Psoas muscle (tissue), 8 donors: ENCODE measurements at regions of chr11 and their contacts with region 1.

Region 1: GRCh38 chr11:67507864-67508485 is at the start of gene CDK2AP2:
- DNase-seq: peak; percentile 100
- ATAC-seq: peak; percentile 85 to 90 (median 88)
- H3K4me3 ChIP-seq: peak within 1 kb of the TSS; percentile 90
- H3K27ac ChIP-seq: peak within 1 kb of the TSS; percentile 99
- H3K4me1 ChIP-seq: peaks cover 27% of the 10 kb centered on the region
- H3K27me3 ChIP-seq: peaks cover 0 to 11% (median 8%) of the 10 kb centered on the region in 3 donors
- CTCF ChIP-seq: no peak
- total RNA-seq, gene CDK2AP2: 16.3 to 18.5 (median 18.1) TPM

Region 2: GRCh38 chr11:67356864-67357561 is 151.0 kb before region 1 on chr11:
- intact Hi-C with region 1: loop called in 1 of 2 experiments (anchors 2 kb)
- DNase-seq: peak in 1 of 2 donors; percentile 79
- ATAC-seq: peak; percentile 20 to 37 (median 30)
- H3K4me3 ChIP-seq: no peak overlapping the region
- H3K27ac ChIP-seq: peak overlapping the region; percentile 99
- H3K4me1 ChIP-seq: peaks cover 40% of the 10 kb centered on the region
- H3K27me3 ChIP-seq: no peaks in the 10 kb centered on the region
- CTCF ChIP-seq: peak; percentile 89

Region 3: DNA sequence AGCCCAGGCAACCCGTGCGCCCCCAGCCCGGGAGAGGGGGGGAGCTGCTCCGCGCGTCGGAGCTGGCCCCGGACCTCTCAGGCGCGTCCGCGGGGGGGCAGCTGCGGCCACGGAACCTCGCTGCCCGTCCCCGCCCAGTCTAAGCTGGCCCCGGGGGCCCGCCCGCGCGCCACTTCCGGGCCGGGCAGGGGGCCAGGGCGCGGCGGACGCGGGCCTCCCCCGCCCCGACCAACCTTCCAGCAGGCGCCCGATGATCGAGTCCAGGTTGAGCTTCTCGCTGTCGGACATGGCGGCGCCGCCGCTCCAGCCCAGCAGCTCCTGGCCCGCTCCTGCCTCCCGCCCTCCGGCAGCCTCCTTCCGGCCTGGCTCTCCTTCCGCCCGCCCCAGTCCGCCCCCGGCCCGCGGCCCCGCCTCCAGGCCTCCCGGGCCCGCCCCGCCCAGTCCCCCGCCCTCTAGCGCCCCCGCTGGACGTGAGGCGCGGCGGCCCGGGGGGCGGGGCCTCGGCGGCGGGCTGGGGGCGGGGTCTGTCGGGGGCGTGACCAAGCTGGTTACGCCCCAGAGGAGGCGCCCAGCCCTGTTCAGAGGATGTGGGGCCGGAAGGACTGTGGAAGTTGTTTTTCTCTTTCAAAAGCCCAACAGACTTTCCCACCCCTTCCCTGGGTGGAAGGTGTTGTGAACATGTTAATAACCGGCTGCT is 106.3 kb before region 1 on chr11 and contains the start of gene PPP1CA:
- intact Hi-C with region 1: loop called (anchors 1 to 2 kb)
- DNase-seq: peak; percentile 91 to 96
- ATAC-seq: peak; percentile 89 to 92 (median 92)
- H3K4me3 ChIP-seq: peak within 1 kb of the TSS; percentile 99
- H3K27ac ChIP-seq: peak within 1 kb of the TSS; percentile 95
- H3K4me1 ChIP-seq: peaks cover 32% of the 10 kb centered on the region
- H3K27me3 ChIP-seq: no peaks in the 10 kb centered on the region
- CTCF ChIP-seq: peak; percentile 63
- total RNA-seq, gene PPP1CA: 72.6 to 113 (median 86.6) TPM

Region 4: DNA sequence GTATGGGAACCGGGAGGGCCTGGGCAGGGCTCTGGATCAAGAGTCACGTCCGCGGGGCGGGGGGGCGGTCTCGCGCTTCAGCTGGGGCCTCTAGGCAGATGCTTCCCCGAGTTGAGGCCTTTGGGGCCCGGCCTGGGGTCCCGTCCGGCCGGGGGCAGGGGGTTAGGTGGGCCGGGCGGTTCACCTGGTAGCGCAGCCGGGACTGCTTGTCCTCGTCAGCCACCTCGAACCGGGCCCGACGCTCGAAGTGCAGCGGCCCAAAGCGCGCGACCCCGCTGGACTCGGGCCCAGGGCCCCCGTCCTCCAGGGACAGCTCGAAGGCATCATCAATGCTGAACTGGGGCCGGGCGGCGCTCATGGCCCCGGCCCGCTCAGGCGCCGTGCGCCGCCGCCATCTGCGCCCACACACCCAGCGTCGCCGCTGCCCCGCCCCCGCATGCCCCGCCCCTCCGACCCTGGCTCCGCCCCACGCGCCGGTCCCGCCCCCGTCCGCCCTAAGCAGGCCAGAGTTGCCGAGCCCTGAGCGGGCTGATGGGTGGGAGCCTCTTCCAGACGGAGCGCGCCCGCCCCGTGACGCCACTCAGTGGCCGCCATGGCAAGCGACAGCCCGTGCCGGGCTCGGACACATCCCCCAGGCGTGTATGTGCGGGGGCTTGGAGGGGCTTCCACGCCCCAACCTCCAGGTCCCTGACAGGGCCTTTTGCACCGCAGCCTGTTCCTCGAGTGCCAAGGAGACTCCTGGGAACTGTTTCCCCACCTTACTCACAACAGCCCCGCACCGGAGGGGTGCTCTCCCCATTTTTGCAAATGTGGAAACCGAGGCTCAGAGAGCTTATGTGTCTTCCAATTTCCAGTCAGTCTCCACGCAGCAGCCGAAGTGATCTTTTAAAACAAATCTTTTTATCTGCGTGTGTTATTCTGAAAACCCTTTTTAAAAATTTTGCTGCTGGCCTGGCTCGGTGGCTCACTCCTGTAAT is 38.9 kb before region 1 on chr11 and contains the start of gene TMEM134:
- intact Hi-C with region 1: loop called in 1 of 2 experiments (anchors 5 kb)
- DNase-seq: peak; percentile 93 to 97
- ATAC-seq: peak; percentile 93 to 97 (median 96)
- H3K4me3 ChIP-seq: peak within 1 kb of the TSS; percentile 98
- H3K27ac ChIP-seq: peak within 1 kb of the TSS; percentile 85
- H3K4me1 ChIP-seq: peaks cover 13% of the 10 kb centered on the region
- H3K27me3 ChIP-seq: no peaks in the 10 kb centered on the region
- CTCF ChIP-seq: peak; percentile 47
- total RNA-seq, gene TMEM134: 57.1 to 83.2 (median 66.2) TPM